ENCODE measurements at regions of chr11 and their contacts with region 1.

Region 1: GRCh38 chr11:15650105-15650938 is 535.6 kb downstream of the INSC start:
- DNase-seq: peak; percentile 90
- H3K4me3 ChIP-seq: peak overlapping the region in 2 of 3 experiments; percentile 19 to 24
- H3K27ac ChIP-seq: no peak overlapping the region
- H3K4me1 ChIP-seq: peaks cover 3% of the 10 kb centered on the region
- H3K27me3 ChIP-seq: no peaks in the 10 kb centered on the region
- CTCF ChIP-seq: peak; percentile 91 to 98
- POLR2A ChIP-seq: no peak

Region 2: DNA sequence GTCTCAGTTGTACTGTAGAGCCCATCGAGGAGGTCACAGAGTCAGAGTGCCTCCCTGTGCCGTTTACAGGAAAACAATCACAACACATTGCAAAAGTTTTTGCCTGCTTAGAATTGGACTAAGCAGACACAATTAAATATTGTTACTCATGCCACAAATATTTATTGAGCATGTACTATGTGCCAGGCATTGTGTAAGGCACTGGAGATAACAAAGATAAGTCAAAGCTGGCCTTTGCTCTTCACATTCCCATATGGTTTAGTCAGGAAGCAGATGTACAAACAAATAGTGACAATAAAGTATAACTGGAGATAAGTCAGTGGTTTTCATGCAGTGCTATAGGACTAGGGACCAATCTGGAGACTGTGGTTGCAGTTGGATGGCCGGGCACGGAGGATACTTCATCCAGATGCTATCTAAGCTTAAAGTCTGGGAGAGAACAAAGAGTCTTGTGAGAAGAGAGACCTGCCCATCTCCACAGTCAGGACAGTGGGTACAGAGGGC is 15.1 kb after region 1 on chr11:
- CTCF ChIA-PET with region 1: no interaction called
- POLR2A ChIA-PET with region 1: no interaction called
- dilution Hi-C with region 1: no loop called
- intact Hi-C with region 1: no loop called
- DNase-seq: no peak
- H3K4me3 ChIP-seq: no peak overlapping the region
- H3K27ac ChIP-seq: no peak overlapping the region
- H3K4me1 ChIP-seq: peaks cover 14% of the 10 kb centered on the region
- H3K27me3 ChIP-seq: no peaks in the 10 kb centered on the region
- CTCF ChIP-seq: no peak
- POLR2A ChIP-seq: no peak

Region 3: DNA sequence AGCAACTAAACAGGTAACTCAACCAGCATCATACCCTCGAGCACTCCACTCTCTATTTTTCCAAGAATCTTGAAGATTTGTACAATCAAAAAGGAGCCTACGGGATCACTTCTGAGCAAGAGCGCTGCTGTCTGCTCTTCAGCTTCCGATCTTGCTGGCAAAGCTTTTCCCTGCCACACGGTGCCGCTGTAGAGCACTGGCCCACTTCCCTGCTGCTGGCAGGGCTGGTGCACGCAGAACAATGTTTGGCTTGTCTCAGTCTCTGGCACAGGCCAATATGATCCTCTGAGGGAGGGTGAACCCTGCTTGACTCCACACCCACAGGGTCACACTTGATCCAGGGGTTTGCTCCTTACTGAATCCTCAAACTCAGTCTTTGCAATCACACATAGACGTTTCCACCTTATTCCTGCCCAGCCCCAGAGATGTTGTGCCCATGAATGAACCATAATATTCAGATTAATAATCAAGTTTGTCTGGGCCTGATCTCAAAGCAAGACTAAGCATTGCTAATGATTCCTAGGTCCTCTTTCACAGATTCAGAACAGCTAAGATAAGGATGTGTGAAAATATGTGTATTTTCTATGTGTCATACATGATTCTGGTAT is 169.5 kb after region 1 on chr11:
- CTCF ChIA-PET with region 1: interaction called, 7 read pairs
- POLR2A ChIA-PET with region 1: no interaction called
- dilution Hi-C with region 1: no loop called
- intact Hi-C with region 1: loop called (anchors 2 kb)
- DNase-seq: peak; percentile 61
- H3K4me3 ChIP-seq: no peak overlapping the region
- H3K27ac ChIP-seq: no peak overlapping the region
- H3K4me1 ChIP-seq: no peaks in the 10 kb centered on the region
- H3K27me3 ChIP-seq: peaks cover 3 to 16% of the 10 kb centered on the region in 2 experiments
- CTCF ChIP-seq: peak; percentile 82 to 95
- POLR2A ChIP-seq: no peak

Region 4: DNA sequence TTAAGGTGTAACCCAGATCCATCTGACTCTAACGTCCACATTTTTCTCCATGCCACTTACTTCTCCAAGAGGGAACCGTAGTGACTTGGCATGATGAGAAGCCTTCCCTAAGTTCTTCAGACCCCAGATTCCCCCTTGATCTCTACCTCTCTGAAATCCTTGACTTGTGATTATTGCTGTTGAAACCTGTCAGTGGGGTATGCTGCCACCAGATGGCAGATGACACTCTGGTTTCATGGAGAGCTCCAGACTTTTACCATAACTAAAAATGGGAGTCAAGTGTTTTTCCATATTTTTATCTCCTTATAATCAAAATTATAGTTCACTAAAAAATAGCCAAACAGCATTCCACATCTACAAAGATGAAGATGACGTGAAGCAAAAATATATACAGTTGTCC is 201.9 kb after region 1 on chr11:
- CTCF ChIA-PET with region 1: no interaction called
- POLR2A ChIA-PET with region 1: no interaction called
- dilution Hi-C with region 1: no loop called
- intact Hi-C with region 1: no loop called
- DNase-seq: no peak
- H3K4me3 ChIP-seq: no peak overlapping the region
- H3K27ac ChIP-seq: no peak overlapping the region
- H3K4me1 ChIP-seq: no peaks in the 10 kb centered on the region
- H3K27me3 ChIP-seq: peaks cover 0 to 2% of the 10 kb centered on the region in 2 experiments
- CTCF ChIP-seq: peak; percentile 21 to 30
- POLR2A ChIP-seq: no peak

Measured in endothelial cell of umbilical vein (primary cell).